GM18951 (cell line): ENCODE measurements at regions of chr13 and their contacts with region 1.

Region 1: DNA sequence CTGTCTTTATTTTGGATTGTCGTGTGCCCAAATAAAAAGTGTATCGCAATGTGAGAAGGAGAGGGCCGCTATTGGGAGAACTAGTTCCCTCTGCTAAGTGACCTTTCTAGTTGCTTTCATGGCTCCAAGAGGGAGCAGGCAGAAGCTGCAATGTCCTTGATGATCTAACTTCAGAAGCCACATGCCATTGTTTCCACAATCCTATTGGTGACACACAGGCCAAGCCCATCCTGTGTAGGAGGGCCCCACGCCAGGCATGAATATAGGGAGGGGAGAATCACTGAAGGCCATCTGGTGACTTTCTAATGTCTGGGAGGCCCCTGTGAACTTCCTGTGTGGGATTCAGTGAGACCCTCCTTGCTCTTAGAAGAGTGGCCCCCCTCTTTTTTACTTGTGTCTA is 47.8 kb upstream of the KPNA3 start:
- POLR2A ChIP-seq: no peak

Region 2: GRCh38 chr13:49549289-49549688 is 291.0 kb before region 1 on chr13:
- in situ Hi-C with region 1: no loop called
- POLR2A ChIP-seq: no peak

Region 3: DNA sequence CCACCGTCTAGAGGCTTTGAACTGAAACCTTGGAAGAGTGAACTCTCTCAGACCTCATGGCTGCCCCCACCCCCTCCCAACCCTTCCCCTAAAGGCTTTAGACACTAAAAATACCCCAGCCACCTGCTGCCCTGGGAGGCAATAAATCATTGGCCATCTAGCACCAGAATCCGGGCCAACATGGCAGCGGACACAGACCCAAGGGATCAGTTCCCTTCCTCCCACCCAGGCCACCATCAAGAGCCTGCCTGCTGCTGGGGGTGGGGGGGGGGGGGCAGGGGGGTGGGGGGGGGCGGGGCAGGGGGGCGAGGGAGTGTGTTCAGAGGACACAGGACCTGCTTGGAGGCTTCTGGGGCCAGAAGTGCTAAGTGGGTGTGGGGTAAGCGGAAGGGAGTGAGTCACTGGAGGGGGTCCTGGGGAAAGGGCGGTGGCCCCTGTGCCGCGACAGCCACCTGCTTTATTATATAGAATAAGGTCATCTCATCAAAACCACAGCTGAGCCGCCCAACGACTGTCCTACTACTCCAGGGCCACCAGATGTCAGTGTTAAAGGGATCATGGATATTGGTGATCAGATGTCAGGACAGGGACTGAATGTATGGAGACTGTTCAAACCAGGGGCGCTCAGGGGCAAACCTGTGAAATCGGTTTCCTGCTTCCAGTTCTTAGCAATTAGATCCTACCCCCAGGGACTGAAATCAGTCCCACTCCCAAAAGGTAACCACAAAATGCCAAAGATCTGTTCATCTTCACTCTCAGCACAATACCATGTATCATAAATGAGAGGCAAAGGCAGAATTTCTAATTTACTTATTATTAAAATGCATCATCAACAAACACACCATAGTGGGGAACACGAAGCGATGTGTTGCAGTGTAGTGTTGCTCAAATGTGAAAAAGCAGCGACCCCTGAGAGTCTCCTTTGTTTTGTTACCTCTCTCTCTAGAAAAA is 187.6 kb before region 1 on chr13:
- in situ Hi-C with region 1: loop called (anchors 10 kb)
- POLR2A ChIP-seq: no peak

Region 4: DNA sequence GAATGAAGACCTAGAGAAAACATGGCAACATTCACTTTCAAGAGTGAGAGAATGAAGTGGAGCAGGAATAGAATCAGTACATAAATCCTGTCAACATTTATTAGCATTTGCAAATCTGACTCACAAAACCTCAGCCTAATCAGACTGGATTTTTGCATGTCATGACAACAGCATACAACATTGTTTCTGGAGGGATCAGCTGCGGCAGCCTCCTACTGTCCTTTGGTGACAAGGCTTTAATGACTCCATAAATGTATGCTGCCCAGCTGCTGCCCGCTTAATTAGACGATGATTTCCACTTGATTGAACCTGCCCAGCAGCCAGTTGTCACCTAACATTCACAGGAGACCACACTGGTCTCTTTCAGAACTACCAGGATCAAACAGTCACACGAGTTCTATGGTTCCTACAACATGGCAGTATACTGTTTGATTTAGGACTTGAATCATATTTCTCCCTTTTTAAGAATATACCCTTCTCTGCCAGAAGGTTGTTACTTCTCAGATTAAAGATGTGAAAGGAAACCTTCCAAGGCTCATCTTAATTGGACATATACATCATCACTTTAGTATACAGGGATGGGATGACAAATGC is 158.3 kb before region 1 on chr13:
- in situ Hi-C with region 1: loop called (anchors 10 kb)
- POLR2A ChIP-seq: no peak

Region 5: DNA sequence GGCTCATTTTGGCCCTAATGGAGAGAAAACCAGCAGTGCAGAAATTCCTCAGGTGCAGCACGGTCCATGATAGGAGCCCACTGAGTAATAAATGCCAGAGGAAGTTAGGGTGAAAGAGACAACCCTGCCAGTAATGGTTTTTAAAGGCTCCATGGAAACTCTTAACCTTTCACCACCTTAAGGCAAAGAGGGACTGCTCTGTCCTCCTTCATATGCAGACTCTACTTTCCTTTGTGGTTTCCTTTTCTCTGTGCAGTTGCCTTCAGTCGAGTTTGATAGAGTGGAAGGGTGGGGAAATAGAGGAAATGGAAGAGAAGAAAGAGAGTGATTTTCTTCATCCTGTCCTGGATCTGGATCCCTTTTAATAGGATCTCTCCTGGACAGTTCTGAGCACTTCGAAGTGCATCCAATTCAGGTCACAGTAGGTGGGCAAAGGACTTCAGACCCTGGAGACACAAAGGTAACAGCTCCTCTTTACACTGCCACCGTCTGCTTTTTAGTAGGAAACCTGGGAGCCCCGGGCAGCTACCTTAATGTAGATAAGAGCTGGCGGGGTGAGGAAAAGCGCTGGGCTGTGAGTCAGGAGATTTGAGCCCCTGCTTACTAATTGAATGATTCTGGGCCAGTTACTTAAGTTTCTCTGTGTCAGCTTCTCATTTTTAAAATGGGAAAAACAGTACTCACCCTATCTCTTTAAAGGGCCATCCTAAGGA is 469.8 kb after region 1 on chr13:
- in situ Hi-C with region 1: no loop called
- POLR2A ChIP-seq: no peak